ENCODE measurements at regions of chr12 and their contacts with region 1.

Region 1: DNA sequence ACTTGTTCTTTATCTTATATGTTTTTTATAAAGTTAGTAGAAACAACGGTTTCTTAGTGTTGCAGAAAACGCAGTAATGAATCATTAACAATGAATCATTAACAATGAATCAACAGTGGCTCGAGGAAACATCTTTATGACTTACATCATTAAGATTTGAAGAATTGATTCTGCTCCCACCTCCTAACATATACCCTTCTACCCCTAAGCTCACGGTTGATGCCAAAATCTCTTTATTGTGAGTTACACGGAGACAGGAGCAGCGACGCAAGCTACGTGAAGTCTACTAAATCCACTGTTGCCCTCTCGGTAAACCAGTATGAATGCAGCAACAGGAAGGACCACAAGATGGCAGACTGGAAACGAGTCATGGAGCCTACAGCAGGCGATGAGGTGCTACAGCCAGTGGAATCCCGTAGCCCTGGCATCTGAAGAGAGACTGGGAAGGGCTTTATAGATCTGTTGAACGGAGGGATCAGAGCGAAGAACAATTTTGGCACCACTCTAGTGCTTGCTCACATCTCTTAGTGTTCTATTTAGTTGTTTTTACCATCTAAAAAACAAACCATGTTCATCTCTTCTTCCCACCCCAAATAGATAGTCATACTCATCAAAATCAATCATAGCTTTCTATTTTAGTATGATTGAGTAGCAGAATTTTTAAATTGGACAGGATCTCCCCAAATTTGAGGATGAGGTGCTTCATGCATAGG is 332.7 kb downstream of the DUSP6 start:
- DNase-seq: peak; percentile 90
- ATAC-seq: peak; percentile 96
- H3K4me3 Mint-ChIP-seq: no peak overlapping the region
- H3K27ac Mint-ChIP-seq: no peak overlapping the region
- H3K4me1 Mint-ChIP-seq: peaks cover 33% of the 10 kb centered on the region
- H3K27me3 Mint-ChIP-seq: no peaks in the 10 kb centered on the region

Region 2: GRCh38 chr12:88934163-88934747 is 85.3 kb before region 1 on chr12:
- CTCF ChIA-PET with region 1: no interaction called
- DNase-seq: no peak
- ATAC-seq: no peak
- H3K4me3 Mint-ChIP-seq: no peak overlapping the region
- H3K27ac Mint-ChIP-seq: no peak overlapping the region
- H3K4me1 Mint-ChIP-seq: no peaks in the 10 kb centered on the region
- H3K27me3 Mint-ChIP-seq: peaks cover 3% of the 10 kb centered on the region

Region 3: GRCh38 chr12:89040146-89040964 is 20.8 kb after region 1 on chr12:
- CTCF ChIA-PET with region 1: interaction called, 73 read pairs
- DNase-seq: peak; percentile 95
- ATAC-seq: peak; percentile 95
- H3K4me3 Mint-ChIP-seq: peak overlapping the region; percentile 7
- H3K27ac Mint-ChIP-seq: peak overlapping the region; percentile 92
- H3K4me1 Mint-ChIP-seq: peaks cover 68% of the 10 kb centered on the region
- H3K27me3 Mint-ChIP-seq: no peaks in the 10 kb centered on the region

Region 4: GRCh38 chr12:89084751-89085150 is 65.2 kb after region 1 on chr12:
- CTCF ChIA-PET with region 1: no interaction called
- DNase-seq: no peak
- ATAC-seq: no peak
- H3K4me3 Mint-ChIP-seq: no peak overlapping the region
- H3K27ac Mint-ChIP-seq: no peak overlapping the region
- H3K4me1 Mint-ChIP-seq: peaks cover 11% of the 10 kb centered on the region
- H3K27me3 Mint-ChIP-seq: no peaks in the 10 kb centered on the region

Region 5: DNA sequence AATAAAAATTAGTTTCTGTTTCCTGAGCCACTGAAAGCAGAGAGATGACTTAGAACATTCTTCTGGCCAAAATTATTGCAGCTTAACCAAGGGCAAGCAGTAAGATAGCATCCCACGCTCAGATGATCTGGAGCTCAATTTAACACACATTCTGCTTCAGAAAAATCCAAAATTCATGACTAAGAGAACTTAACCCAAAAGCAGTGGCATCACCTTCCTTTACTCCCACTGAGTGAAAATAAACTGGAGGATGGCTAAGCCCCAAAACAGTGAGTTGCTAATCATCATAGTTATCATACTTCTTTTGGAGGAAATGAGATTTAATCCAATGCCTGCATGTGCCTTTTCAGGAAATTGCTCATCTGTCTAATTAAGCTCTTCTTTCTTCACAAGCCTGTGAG is 137.3 kb after region 1 on chr12:
- CTCF ChIA-PET with region 1: no interaction called
- DNase-seq: no peak
- ATAC-seq: peak; percentile 58
- H3K4me3 Mint-ChIP-seq: no peak overlapping the region
- H3K27ac Mint-ChIP-seq: peak overlapping the region; percentile 75
- H3K4me1 Mint-ChIP-seq: peaks cover 25% of the 10 kb centered on the region
- H3K27me3 Mint-ChIP-seq: no peaks in the 10 kb centered on the region

Region 6: DNA sequence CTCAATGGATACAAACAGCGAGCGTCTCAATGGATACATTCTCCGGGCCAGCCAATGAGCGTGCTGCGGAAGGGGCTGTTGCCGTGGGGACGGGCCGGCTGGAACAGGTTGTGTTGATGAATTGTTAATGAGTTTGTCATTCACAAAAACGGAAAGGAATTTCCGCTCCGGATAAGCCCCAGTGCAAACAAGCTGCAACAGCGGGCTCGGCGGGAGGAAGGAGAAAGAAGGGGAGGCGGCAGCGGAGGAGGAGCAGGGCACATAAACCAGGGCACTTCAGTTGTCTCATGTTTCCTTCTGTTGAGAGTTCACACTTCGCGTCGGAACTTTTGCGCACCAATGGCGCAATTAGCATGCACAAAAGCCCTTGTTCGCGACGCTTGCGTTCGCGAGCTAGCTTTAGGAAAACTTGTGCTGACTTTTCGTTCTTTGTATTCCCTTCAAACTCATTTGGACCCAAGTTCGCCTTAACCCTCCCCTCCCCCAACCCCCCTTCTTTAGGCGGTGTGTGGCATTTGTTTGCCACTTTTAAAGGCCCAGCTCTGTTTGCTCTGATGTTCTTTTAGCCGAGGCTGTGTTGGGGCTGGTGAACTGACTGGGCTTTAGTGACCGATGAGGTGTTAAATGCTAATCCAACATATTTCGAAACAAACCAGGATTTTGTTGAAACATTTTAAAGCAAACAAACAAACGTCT is 333.1 kb after region 1 on chr12 and contains the start of gene DUSP6:
- CTCF ChIA-PET with region 1: interaction called, 12 read pairs
- DNase-seq: peak; percentile 98
- ATAC-seq: peak; percentile 82
- H3K4me3 Mint-ChIP-seq: peak within 1 kb of the TSS; percentile 93
- H3K27ac Mint-ChIP-seq: peak within 1 kb of the TSS; percentile 93
- H3K4me1 Mint-ChIP-seq: peaks cover 38% of the 10 kb centered on the region
- H3K27me3 Mint-ChIP-seq: no peaks in the 10 kb centered on the region
- total RNA-seq, gene DUSP6: 76.3 to 100 TPM

Region 7: GRCh38 chr12:89524541-89525285 is 505.1 kb after region 1 on chr12 and contains the start of gene GALNT4:
- CTCF ChIA-PET with region 1: interaction called, 86 read pairs
- DNase-seq: peak; percentile 89
- ATAC-seq: peak; percentile 73
- H3K4me3 Mint-ChIP-seq: peak within 1 kb of the TSS; percentile 92
- H3K27ac Mint-ChIP-seq: peak within 1 kb of the TSS; percentile 97
- H3K4me1 Mint-ChIP-seq: peaks cover 74% of the 10 kb centered on the region
- H3K27me3 Mint-ChIP-seq: no peaks in the 10 kb centered on the region
- total RNA-seq, gene GALNT4: 16.5 to 17.5 TPM

Measured in activated CD8-positive, alpha-beta memory T cell treated with anti-CD3 and anti-CD28 coated beads, Interleukin-2, amount 10 ng/mL, durations not matched to agents 7 days and 5 days (primary cell).